Caco-2 (cell line): ENCODE measurements at regions of chr2 and their contacts with region 1.

Region 1: GRCh38 chr2:246489-247144 is 17.2 kb downstream of the SH3YL1 start:
- DNase-seq: peak in 1 of 2 experiments; percentile 70
- H3K4me3 ChIP-seq: no peak overlapping the region
- H3K4me3 Mint-ChIP-seq: no peak overlapping the region
- H3K27ac Mint-ChIP-seq: no peak overlapping the region
- H3K4me1 ChIP-seq: no peaks in the 10 kb centered on the region
- H3K4me1 Mint-ChIP-seq: no peaks in the 10 kb centered on the region
- H3K27me3 ChIP-seq: no peaks in the 10 kb centered on the region
- H3K27me3 Mint-ChIP-seq: no peaks in the 10 kb centered on the region
- CTCF ChIP-seq: peak; percentile 61 to 69

Region 2: GRCh38 chr2:264660-265468 is 18.2 kb after region 1 on chr2 and contains the start of gene ACP1:
- CTCF ChIA-PET with region 1: interaction called, 10 read pairs
- POLR2A ChIA-PET with region 1: no interaction called
- intact Hi-C with region 1: loop called (anchors 1 kb)
- DNase-seq: peak; percentile 99 to 100
- H3K4me3 ChIP-seq: peak within 1 kb of the TSS; percentile 96
- H3K4me3 Mint-ChIP-seq: peak within 1 kb of the TSS; percentile 86
- H3K27ac Mint-ChIP-seq: peak within 1 kb of the TSS; percentile 87
- H3K4me1 ChIP-seq: peaks cover 32% of the 10 kb centered on the region
- H3K4me1 Mint-ChIP-seq: peaks cover 29% of the 10 kb centered on the region
- H3K27me3 ChIP-seq: no peaks in the 10 kb centered on the region
- H3K27me3 Mint-ChIP-seq: no peaks in the 10 kb centered on the region
- CTCF ChIP-seq: no peak
- total RNA-seq, gene ACP1: 166 and 193 TPM in 2 replicates

Region 3: GRCh38 chr2:383178-383577 is 136.6 kb after region 1 on chr2:
- CTCF ChIA-PET with region 1: no interaction called
- POLR2A ChIA-PET with region 1: no interaction called
- intact Hi-C with region 1: no loop called
- DNase-seq: no peak
- H3K4me3 ChIP-seq: no peak overlapping the region
- H3K4me3 Mint-ChIP-seq: no peak overlapping the region
- H3K27ac Mint-ChIP-seq: no peak overlapping the region
- H3K4me1 ChIP-seq: no peaks in the 10 kb centered on the region
- H3K4me1 Mint-ChIP-seq: no peaks in the 10 kb centered on the region
- H3K27me3 ChIP-seq: no peaks in the 10 kb centered on the region
- H3K27me3 Mint-ChIP-seq: no peaks in the 10 kb centered on the region
- CTCF ChIP-seq: no peak